Upper lobe of right lung (tissue), 1 donor: ENCODE measurements at regions of chr12 and their contacts with region 1.

Region 1: DNA sequence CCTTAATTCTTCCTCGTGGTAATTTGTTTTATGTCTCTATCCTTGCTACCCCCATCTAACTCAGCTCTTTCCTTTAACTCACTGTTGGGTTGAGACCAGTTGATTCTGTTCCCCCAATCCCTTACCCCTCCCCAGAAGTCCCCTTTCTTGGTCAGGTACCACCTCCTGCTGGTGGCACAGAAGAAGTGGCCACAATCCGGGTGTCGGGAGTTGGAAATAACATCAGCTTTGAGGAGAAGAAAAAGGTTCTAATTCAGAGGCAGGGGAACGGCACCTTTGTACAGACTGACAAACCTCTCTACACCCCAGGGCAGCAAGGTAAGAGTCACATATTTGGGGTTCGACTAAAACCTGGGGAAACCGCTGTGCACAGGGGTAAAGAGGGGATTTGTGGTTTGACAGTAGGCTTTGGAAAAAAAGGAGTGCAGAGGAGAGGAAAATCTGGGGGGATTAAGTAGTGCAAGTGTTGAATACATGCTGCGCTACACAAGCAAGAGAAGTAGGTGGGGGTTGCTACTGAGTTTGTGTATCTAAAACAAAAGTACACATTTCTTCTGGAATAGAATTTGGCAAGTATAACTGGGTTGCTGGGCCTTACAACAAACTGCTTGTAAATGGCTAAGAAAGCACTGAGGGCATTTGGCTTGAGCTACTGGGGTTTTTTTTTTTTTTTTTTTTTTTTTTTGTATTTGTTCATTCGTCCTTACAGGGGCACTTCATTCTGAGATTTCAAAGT is 1.3 kb downstream of the A2ML1 start:
- DNase-seq: no peak
- ATAC-seq: peak; percentile 83
- H3K4me3 ChIP-seq: no peak overlapping the region
- H3K27ac ChIP-seq: no peak overlapping the region
- H3K4me1 ChIP-seq: no peaks in the 10 kb centered on the region
- H3K27me3 ChIP-seq: peaks cover 4% of the 10 kb centered on the region
- CTCF ChIP-seq: peak; percentile 71

Region 2: DNA sequence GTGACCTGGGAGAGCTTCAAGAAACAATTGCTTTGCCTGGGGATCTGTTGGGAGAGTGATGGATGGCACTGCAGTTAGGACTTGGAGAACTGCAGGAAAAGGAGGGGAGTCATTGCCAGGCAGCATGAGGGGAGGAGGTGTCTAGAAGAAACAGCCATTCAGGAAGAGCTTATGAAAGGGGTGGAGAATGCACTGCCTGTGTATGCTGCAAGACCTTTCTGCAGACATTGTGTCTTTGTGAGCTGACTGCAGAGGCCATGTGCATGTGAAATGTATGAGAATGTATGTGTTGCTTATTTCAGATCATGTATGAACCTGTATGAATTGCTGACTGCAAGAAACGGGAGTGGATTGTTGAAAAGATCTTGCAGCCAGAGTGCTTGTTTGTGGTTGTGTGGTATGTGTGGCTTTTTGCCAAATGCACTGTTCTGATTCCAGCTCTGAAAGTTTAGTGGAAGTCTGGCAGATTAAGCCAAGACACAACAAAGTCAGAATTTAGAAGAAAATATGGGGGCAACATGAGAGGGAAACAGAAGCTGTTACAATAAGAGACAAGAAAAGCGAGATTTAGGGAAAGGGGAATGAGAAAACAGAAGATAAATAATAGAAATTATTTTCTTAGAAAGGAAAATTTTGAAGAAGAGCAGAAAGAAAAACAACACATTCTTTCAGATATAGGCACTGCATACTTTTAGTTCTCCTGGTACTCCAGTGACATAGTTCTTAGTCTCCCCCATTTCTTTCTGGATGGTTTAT is 135.7 kb before region 1 on chr12:
- intact Hi-C with region 1: loop called (anchors 10 kb)
- DNase-seq: no peak
- ATAC-seq: peak; percentile 94
- H3K4me3 ChIP-seq: no peak overlapping the region
- H3K27ac ChIP-seq: peak overlapping the region; percentile 43
- H3K4me1 ChIP-seq: peaks cover 27% of the 10 kb centered on the region
- H3K27me3 ChIP-seq: no peaks in the 10 kb centered on the region
- CTCF ChIP-seq: no peak

Region 3: GRCh38 chr12:8969861-8970412 is 146.2 kb after region 1 on chr12:
- intact Hi-C with region 1: no loop called
- DNase-seq: no peak
- ATAC-seq: no peak
- H3K4me3 ChIP-seq: no peak overlapping the region
- H3K27ac ChIP-seq: no peak overlapping the region
- H3K4me1 ChIP-seq: no peaks in the 10 kb centered on the region
- H3K27me3 ChIP-seq: no peaks in the 10 kb centered on the region
- CTCF ChIP-seq: no peak

Region 4: DNA sequence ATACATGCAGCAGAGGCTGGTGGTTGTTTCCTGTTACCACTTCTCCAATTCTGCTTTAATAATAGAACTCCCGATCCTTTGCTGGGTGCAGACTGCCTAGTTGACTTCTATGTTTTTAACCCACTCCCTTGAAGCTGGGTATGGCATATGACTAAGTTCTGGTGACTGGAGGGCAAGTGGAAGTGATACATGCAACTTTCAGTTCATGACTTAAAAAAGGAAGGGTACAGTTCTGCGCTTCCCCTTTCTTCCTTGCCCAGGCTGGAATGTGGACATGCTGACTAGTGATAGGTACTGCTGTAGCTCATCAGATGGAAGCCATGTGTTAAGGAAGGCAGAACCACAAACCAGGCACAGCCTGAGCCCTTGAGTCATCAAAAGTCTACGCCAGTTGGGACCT is 294.4 kb after region 1 on chr12:
- intact Hi-C with region 1: no loop called
- DNase-seq: no peak
- ATAC-seq: peak; percentile 94
- H3K4me3 ChIP-seq: no peak overlapping the region
- H3K27ac ChIP-seq: peak overlapping the region; percentile 85
- H3K4me1 ChIP-seq: peaks cover 36% of the 10 kb centered on the region
- H3K27me3 ChIP-seq: no peaks in the 10 kb centered on the region
- CTCF ChIP-seq: no peak